ENCODE measurements at regions of chr18 and their contacts with region 1.

Region 1: GRCh38 chr18:10715791-10716190 is 190.0 kb downstream of the NAPG start:
- DNase-seq: peak; percentile 77
- H3K4me3 Mint-ChIP-seq: no peak overlapping the region
- H3K27ac Mint-ChIP-seq: peak overlapping the region; percentile 73
- H3K4me1 Mint-ChIP-seq: peaks cover 12% of the 10 kb centered on the region
- H3K27me3 Mint-ChIP-seq: no peaks in the 10 kb centered on the region
- CTCF ChIP-seq: no peak

Region 2: GRCh38 chr18:10694835-10695435 is 20.9 kb before region 1 on chr18:
- CTCF ChIA-PET with region 1: no interaction called
- POLR2A ChIA-PET with region 1: interaction called, 10 read pairs
- intact Hi-C with region 1: no loop called
- DNase-seq: no peak
- H3K4me3 Mint-ChIP-seq: no peak overlapping the region
- H3K27ac Mint-ChIP-seq: no peak overlapping the region
- H3K4me1 Mint-ChIP-seq: peaks cover 7% of the 10 kb centered on the region
- H3K27me3 Mint-ChIP-seq: no peaks in the 10 kb centered on the region
- CTCF ChIP-seq: no peak

Region 3: GRCh38 chr18:10953672-10954071 is 237.9 kb after region 1 on chr18:
- CTCF ChIA-PET with region 1: no interaction called
- POLR2A ChIA-PET with region 1: no interaction called
- intact Hi-C with region 1: no loop called
- DNase-seq: no peak
- H3K4me3 Mint-ChIP-seq: no peak overlapping the region
- H3K27ac Mint-ChIP-seq: no peak overlapping the region
- H3K4me1 Mint-ChIP-seq: peaks cover 15% of the 10 kb centered on the region
- H3K27me3 Mint-ChIP-seq: no peaks in the 10 kb centered on the region
- CTCF ChIP-seq: no peak

Measured in MCF 10A (cell line).